Naive thymus-derived CD4-positive, alpha-beta T cell (primary cell): ENCODE measurements at regions of chr3 and their contacts with region 1.

Region 1: GRCh38 chr3:179147873-179148615 is at the start of gene PIK3CA:
- DNase-seq: peak; percentile 71 to 99 (median 95)
- ATAC-seq: peak; percentile 88
- H3K4me3 ChIP-seq: peak within 1 kb of the TSS; percentile 87
- H3K4me3 Mint-ChIP-seq: peak within 1 kb of the TSS in 7 of 10 donors; percentile 95 to 100 (median 97)
- H3K27ac ChIP-seq: peak within 1 kb of the TSS; percentile 93
- H3K27ac Mint-ChIP-seq: peak within 1 kb of the TSS in 8 of 9 donors; percentile 94 to 99 (median 96)
- H3K4me1 ChIP-seq: peaks cover 15 to 17% of the 10 kb centered on the region in 2 donors
- H3K4me1 Mint-ChIP-seq: peaks cover 27 to 47% (median 41%) of the 10 kb centered on the region in 7 donors
- H3K27me3 ChIP-seq: no peaks in the 10 kb centered on the region
- H3K27me3 Mint-ChIP-seq: peaks cover 0 to 21% (median 0%) of the 10 kb centered on the region in 5 donors
- total RNA-seq, gene PIK3CA: 27.4 to 58.1 (median 43.7) TPM

Region 2: GRCh38 chr3:178562143-178562946 is 585.7 kb before region 1 on chr3:
- CTCF ChIA-PET with region 1: no interaction called
- POLR2A ChIA-PET with region 1: no interaction called
- intact Hi-C with region 1: no loop called
- DNase-seq: no peak
- ATAC-seq: no peak
- H3K4me3 ChIP-seq: no peak overlapping the region
- H3K4me3 Mint-ChIP-seq: no peak overlapping the region
- H3K27ac ChIP-seq: no peak overlapping the region
- H3K27ac Mint-ChIP-seq: no peak overlapping the region
- H3K4me1 ChIP-seq: no peaks in the 10 kb centered on the region
- H3K4me1 Mint-ChIP-seq: no peaks in the 10 kb centered on the region
- H3K27me3 ChIP-seq: no peaks in the 10 kb centered on the region
- H3K27me3 Mint-ChIP-seq: peaks cover 0 to 8% (median 4%) of the 10 kb centered on the region in 5 donors

Region 3: DNA sequence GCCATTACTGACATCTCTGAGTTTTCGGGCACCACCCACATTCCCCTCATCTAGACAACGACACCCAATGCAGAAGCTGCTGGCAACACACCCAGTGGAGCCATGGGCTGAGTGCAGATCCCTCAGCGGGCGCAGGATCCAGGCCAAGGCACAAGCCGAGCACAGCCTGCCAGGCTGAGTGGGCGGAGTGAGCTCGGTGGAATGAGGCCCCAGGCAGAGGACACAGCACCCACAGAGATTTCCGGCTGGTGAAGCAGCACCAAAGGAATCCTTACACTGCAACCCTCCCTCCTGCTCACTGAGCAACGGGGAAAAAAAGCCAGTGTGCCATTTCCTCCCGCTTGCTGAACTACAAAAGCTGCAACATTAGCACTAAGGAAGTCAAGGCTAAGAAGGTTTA is 110.7 kb before region 1 on chr3:
- CTCF ChIA-PET with region 1: interaction called, 4 read pairs
- POLR2A ChIA-PET with region 1: interaction called, 33 read pairs
- intact Hi-C with region 1: no loop called
- DNase-seq: peak in 8 of 9 donors; percentile 62 to 81 (median 76)
- ATAC-seq: peak; percentile 95
- H3K4me3 ChIP-seq: peak overlapping the region; percentile 44
- H3K4me3 Mint-ChIP-seq: peak overlapping the region in 4 of 10 donors; percentile 55 to 79 (median 70)
- H3K27ac ChIP-seq: peak overlapping the region; percentile 69
- H3K27ac Mint-ChIP-seq: peak overlapping the region in 1 of 9 donors; percentile 79
- H3K4me1 ChIP-seq: peaks cover 11 to 33% of the 10 kb centered on the region in 2 donors
- H3K4me1 Mint-ChIP-seq: peaks cover 9 to 19% (median 17%) of the 10 kb centered on the region in 7 donors
- H3K27me3 ChIP-seq: no peaks in the 10 kb centered on the region
- H3K27me3 Mint-ChIP-seq: no peaks in the 10 kb centered on the region

Region 4: GRCh38 chr3:179164857-179165256 is 16.8 kb after region 1 on chr3:
- CTCF ChIA-PET with region 1: no interaction called
- POLR2A ChIA-PET with region 1: interaction called, 8 read pairs
- intact Hi-C with region 1: loop called in 1 of 2 experiments (anchors 2 kb)
- DNase-seq: no peak
- ATAC-seq: no peak
- H3K4me3 ChIP-seq: no peak overlapping the region
- H3K4me3 Mint-ChIP-seq: peak overlapping the region in 1 of 10 donors; percentile 12
- H3K27ac ChIP-seq: no peak overlapping the region
- H3K27ac Mint-ChIP-seq: peak overlapping the region in 2 of 9 donors; percentile 9
- H3K4me1 ChIP-seq: peaks cover 0 to 6% of the 10 kb centered on the region in 2 donors
- H3K4me1 Mint-ChIP-seq: peaks cover 12 to 89% (median 79%) of the 10 kb centered on the region in 7 donors
- H3K27me3 ChIP-seq: no peaks in the 10 kb centered on the region
- H3K27me3 Mint-ChIP-seq: no peaks in the 10 kb centered on the region

Region 5: DNA sequence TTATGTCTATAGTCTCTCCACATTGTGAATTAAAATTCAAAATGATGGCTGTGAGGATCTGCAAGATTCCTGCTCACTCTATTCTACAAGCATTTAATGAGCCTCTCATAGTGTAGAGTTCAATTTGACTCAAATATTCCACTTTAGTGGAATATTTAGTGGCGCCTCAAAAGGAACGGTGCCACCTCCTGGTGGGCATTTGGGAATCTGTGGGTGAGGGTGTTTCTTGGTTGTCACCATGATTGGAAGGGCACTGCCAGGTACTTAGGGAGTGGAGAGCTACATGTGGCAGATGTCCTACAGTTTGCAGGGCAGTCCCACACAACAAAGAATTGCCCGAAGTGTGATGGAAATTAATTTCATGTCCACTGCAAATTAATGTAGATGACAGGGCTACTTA is 124.3 kb after region 1 on chr3:
- CTCF ChIA-PET with region 1: no interaction called
- POLR2A ChIA-PET with region 1: no interaction called
- intact Hi-C with region 1: loop called in 1 of 2 experiments (anchors 1 kb)
- DNase-seq: no peak
- ATAC-seq: no peak
- H3K4me3 ChIP-seq: no peak overlapping the region
- H3K4me3 Mint-ChIP-seq: no peak overlapping the region
- H3K27ac ChIP-seq: no peak overlapping the region
- H3K27ac Mint-ChIP-seq: no peak overlapping the region
- H3K4me1 ChIP-seq: no peaks in the 10 kb centered on the region
- H3K4me1 Mint-ChIP-seq: peaks cover 0 to 2% (median 0%) of the 10 kb centered on the region in 7 donors
- H3K27me3 ChIP-seq: no peaks in the 10 kb centered on the region
- H3K27me3 Mint-ChIP-seq: peaks cover 6 to 15% (median 8%) of the 10 kb centered on the region in 5 donors

Region 6: DNA sequence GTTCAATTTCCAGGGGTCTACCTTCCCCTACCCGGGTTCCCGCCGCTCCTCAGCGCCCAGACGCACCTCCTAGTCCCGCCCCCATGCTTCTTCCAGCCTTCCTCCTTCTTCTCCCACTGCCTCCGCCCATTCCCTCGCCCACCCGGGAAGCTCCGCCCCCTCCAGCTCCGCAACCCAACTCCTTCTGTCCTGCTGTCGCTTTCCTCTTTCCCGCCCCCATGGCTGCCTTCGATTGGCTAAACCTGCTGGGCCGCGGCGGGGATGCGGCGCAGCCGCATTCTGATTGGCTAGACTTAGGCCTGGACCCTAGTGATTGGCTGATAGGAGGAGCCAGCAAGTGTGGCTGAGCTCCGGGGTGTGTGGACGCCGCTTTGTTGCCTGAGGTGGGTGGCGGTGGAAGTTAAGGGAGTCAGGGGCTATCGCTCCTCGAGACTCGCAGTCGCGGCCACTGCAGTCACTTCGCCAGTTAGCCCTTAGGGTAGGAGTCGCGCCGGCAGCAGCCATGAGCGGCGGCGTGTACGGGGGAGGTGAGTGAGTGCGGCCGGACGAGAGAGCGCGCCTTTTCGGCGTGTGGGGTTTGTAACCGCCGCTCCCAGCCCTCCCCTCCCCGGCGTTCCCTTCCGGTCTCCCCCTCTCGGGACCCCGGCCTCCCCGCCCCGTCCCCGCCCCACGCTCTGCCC is 414.7 kb after region 1 on chr3 and contains the start of gene ACTL6A:
- CTCF ChIA-PET with region 1: no interaction called
- POLR2A ChIA-PET with region 1: interaction called, 8 read pairs
- intact Hi-C with region 1: loop called (anchors 1 kb)
- DNase-seq: peak; percentile 86 to 98 (median 96)
- ATAC-seq: peak; percentile 96
- H3K4me3 ChIP-seq: peak within 1 kb of the TSS; percentile 73
- H3K4me3 Mint-ChIP-seq: peak within 1 kb of the TSS; percentile 91 to 100 (median 99)
- H3K27ac ChIP-seq: peak within 1 kb of the TSS; percentile 78
- H3K27ac Mint-ChIP-seq: peak within 1 kb of the TSS; percentile 86 to 98 (median 95)
- H3K4me1 ChIP-seq: peaks cover 10% of the 10 kb centered on the region in 2 donors
- H3K4me1 Mint-ChIP-seq: peaks cover 13 to 49% (median 33%) of the 10 kb centered on the region in 7 donors
- H3K27me3 ChIP-seq: no peaks in the 10 kb centered on the region
- H3K27me3 Mint-ChIP-seq: peaks cover 0 to 13% (median 0%) of the 10 kb centered on the region in 5 donors
- total RNA-seq, gene ACTL6A: 23.2 to 78.3 (median 49.0) TPM

Region 7: GRCh38 chr3:180073561-180073960 is 925.5 kb after region 1 on chr3:
- CTCF ChIA-PET with region 1: no interaction called
- POLR2A ChIA-PET with region 1: no interaction called
- intact Hi-C with region 1: no loop called
- DNase-seq: no peak
- ATAC-seq: no peak
- H3K4me3 ChIP-seq: no peak overlapping the region
- H3K4me3 Mint-ChIP-seq: no peak overlapping the region
- H3K27ac ChIP-seq: no peak overlapping the region
- H3K27ac Mint-ChIP-seq: no peak overlapping the region
- H3K4me1 ChIP-seq: no peaks in the 10 kb centered on the region
- H3K4me1 Mint-ChIP-seq: no peaks in the 10 kb centered on the region
- H3K27me3 ChIP-seq: no peaks in the 10 kb centered on the region
- H3K27me3 Mint-ChIP-seq: peaks cover 0 to 9% (median 0%) of the 10 kb centered on the region in 5 donors

Region 8: DNA sequence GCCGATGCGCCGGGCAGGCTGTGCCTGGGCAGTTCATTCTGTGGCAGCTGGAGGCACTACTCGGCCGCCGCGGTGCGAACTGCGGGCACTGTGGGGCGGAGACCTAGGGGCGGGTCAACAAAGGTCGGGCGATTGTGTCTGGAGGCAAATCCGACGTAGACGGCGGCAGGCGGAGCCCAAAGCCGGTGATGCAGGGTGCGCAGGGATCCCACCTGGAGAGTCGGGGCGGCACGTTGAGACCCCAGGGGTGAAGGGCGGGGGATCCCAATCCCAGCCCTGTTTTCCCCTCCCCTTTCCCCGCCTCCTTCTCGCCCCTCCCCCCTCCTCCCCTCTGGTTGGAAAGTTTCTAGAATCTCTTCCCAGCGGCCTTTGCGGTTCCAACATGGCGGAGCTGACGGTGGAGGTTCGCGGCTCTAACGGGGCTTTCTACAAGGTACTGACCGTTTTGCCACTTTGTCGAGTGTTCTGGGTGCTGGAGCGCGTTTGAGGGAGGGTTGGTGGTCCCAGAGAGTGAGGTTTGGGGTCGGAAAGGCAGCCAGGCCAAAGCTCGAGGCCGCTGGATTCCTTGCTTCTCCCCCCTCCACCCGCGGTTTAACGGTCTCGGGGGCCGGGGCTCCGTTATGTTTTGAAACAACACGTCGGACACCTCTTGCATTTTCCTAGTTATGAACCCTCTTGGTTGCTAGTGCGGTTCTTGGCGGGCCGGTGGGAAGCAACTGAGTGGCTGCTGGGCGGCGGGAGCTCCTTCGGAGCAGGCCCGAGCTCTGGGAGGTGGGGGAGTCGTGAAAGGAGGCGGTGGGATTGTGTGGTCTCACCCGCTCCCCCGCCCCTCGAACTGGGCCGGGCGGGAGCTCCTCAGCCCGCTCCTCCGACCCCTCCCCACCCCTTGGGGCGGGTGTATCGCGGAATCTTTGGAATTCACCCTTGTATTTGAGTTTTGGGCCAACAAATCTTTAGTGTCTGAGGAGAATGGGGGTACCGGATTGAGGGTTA is 1764.6 kb after region 1 on chr3 and contains the start of gene FXR1:
- CTCF ChIA-PET with region 1: no interaction called
- POLR2A ChIA-PET with region 1: interaction called, 4 read pairs
- intact Hi-C with region 1: loop called (anchors 1 to 2 kb)
- DNase-seq: peak; percentile 80 to 91 (median 89)
- ATAC-seq: peak; percentile 95
- H3K4me3 ChIP-seq: peak within 1 kb of the TSS; percentile 80
- H3K4me3 Mint-ChIP-seq: peak within 1 kb of the TSS; percentile 91 to 98 (median 96)
- H3K27ac ChIP-seq: peak within 1 kb of the TSS; percentile 97
- H3K27ac Mint-ChIP-seq: peak within 1 kb of the TSS; percentile 94 to 100 (median 97)
- H3K4me1 ChIP-seq: peaks cover 17 to 25% of the 10 kb centered on the region in 2 donors
- H3K4me1 Mint-ChIP-seq: peaks cover 35 to 76% (median 67%) of the 10 kb centered on the region in 7 donors
- H3K27me3 ChIP-seq: no peaks in the 10 kb centered on the region
- H3K27me3 Mint-ChIP-seq: no peaks in the 10 kb centered on the region
- total RNA-seq, gene FXR1: 108 to 151 (median 129) TPM